Calu3 (cell line): ENCODE measurements at regions of chr3 and their contacts with region 1.

Region 1: GRCh38 chr3:194592798-194593752 is 40.1 kb downstream of the TMEM44 start:
- DNase-seq: peak; percentile 78
- H3K4me3 Mint-ChIP-seq: no peak overlapping the region
- H3K27ac Mint-ChIP-seq: no peak overlapping the region
- H3K4me1 Mint-ChIP-seq: peaks cover 26% of the 10 kb centered on the region
- H3K27me3 Mint-ChIP-seq: no peaks in the 10 kb centered on the region
- CTCF ChIP-seq: no peak

Region 2: DNA sequence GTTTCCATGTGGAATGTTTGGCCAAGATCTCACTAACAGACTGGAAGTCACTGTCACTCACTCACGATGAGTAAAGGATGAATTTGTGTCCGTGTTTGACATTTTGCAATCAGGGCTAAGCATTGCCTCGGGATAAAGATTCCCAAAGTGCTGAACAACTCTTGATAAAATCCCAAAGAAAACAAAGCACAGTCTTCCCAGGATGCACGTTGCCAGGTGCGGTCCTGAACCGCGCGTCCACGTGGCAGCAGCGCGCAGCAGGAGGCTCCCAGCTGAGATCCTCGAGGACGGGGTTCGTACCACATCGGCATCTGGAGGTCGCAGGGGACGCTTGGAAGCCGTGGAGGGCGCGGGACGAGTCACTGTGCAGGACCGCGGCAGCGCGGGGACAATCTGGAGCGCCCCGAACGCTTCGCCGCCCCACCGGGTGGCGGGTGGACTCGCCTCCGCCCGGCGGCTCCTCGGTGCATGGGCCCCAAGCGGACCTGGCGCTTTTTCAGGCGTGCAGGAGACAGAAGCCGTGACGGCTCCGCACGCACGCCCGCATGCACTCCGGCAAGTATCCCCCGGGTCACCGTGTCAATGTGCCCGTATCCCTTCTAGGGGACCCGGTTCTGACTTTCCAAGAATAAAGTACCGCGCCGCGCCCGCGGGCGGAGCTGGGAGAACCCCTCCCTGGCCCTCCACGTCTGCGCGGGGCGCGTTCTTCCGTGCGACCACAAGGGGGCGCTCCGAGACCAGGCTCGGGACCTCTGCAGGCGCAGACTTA is 259.7 kb before region 1 on chr3:
- CTCF ChIA-PET with region 1: interaction called, 6 read pairs
- intact Hi-C with region 1: loop called (anchors 2 kb)
- DNase-seq: peak; percentile 97
- H3K4me3 Mint-ChIP-seq: peak overlapping the region; percentile 82
- H3K27ac Mint-ChIP-seq: peak overlapping the region; percentile 26
- H3K4me1 Mint-ChIP-seq: peaks cover 22% of the 10 kb centered on the region
- H3K27me3 Mint-ChIP-seq: peaks cover 19% of the 10 kb centered on the region
- CTCF ChIP-seq: peak; percentile 100

Region 3: DNA sequence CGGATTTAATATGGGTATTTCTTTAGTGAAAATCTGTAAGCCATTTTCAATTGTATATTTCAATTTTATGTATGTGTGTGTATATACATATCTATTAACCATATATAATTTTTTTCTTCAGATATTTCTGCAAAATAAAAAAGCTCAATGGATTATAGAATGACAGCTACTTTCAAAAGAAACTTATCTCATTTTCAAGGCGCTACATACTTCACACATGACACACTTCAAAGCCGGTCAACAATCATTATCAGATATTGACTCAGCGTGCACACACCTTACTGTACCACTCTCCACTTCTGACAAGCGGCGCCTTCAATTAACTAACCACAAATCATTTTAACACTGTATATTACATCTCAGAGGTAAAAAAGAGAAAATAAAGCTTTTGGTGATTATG is 145.9 kb before region 1 on chr3:
- CTCF ChIA-PET with region 1: interaction called, 23 read pairs
- intact Hi-C with region 1: no loop called
- DNase-seq: peak; percentile 58
- H3K4me3 Mint-ChIP-seq: no peak overlapping the region
- H3K27ac Mint-ChIP-seq: no peak overlapping the region
- H3K4me1 Mint-ChIP-seq: peaks cover 15% of the 10 kb centered on the region
- H3K27me3 Mint-ChIP-seq: no peaks in the 10 kb centered on the region
- CTCF ChIP-seq: no peak

Region 4: GRCh38 chr3:194472290-194472920 is 120.7 kb before region 1 on chr3:
- CTCF ChIA-PET with region 1: interaction called, 54 read pairs
- intact Hi-C with region 1: loop called (anchors 1 kb)
- DNase-seq: peak; percentile 49
- H3K4me3 Mint-ChIP-seq: no peak overlapping the region
- H3K27ac Mint-ChIP-seq: no peak overlapping the region
- H3K4me1 Mint-ChIP-seq: peaks cover 9% of the 10 kb centered on the region
- H3K27me3 Mint-ChIP-seq: no peaks in the 10 kb centered on the region
- CTCF ChIP-seq: peak; percentile 87

Region 5: GRCh38 chr3:194486540-194487288 is 106.4 kb before region 1 on chr3 and contains the start of gene ATP13A3:
- CTCF ChIA-PET with region 1: interaction called, 15 read pairs
- intact Hi-C with region 1: no loop called
- DNase-seq: peak; percentile 94
- H3K4me3 Mint-ChIP-seq: peak within 1 kb of the TSS; percentile 80
- H3K27ac Mint-ChIP-seq: peak within 1 kb of the TSS; percentile 60
- H3K4me1 Mint-ChIP-seq: peaks cover 45% of the 10 kb centered on the region
- H3K27me3 Mint-ChIP-seq: no peaks in the 10 kb centered on the region
- CTCF ChIP-seq: no peak
- total RNA-seq, gene ATP13A3: 229 and 237 TPM in 2 replicates

Region 6: DNA sequence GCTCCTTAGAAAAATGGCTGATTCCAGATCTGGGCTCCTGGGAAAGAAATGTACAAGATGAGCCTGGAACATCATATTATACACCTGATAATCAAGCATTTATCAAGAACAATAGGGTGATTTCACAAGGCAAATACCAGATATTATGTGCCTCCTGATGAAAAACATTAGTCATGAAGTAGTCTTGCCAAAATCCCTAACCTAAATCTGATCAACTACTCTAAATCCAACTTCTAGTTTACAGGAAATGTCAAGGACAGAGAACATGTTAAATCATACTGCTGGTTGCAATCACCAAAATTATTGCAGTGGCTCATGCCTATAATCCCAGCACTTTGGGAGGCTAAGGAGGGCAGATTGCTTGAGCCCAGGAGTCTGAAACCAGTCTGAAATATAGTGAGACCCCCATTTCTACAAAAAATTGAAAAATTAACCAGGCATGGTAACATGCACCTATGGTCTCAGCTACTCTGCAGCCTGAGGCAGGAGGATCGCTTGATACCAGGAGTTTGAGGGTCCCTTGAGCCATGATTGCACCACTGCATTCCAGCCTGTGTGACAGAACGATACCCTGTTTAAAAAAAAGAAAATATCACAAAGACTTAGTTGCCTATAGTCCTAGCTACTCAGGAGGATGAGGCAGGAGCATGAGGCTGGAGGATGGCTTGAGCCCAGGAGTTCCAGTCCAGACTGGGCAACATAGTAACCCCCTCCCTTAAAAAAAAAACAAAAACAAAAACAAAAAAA is 71.4 kb before region 1 on chr3:
- CTCF ChIA-PET with region 1: no interaction called
- intact Hi-C with region 1: loop called (anchors 5 kb)
- DNase-seq: no peak
- H3K4me3 Mint-ChIP-seq: peak overlapping the region; percentile 37
- H3K27ac Mint-ChIP-seq: peak overlapping the region; percentile 78
- H3K4me1 Mint-ChIP-seq: peaks cover 78% of the 10 kb centered on the region
- H3K27me3 Mint-ChIP-seq: no peaks in the 10 kb centered on the region
- CTCF ChIP-seq: no peak

Region 7: GRCh38 chr3:194573691-194574437 is 19.2 kb before region 1 on chr3:
- CTCF ChIA-PET with region 1: interaction called, 13 read pairs
- intact Hi-C with region 1: no loop called
- DNase-seq: peak; percentile 69
- H3K4me3 Mint-ChIP-seq: no peak overlapping the region
- H3K27ac Mint-ChIP-seq: no peak overlapping the region
- H3K4me1 Mint-ChIP-seq: peaks cover 70% of the 10 kb centered on the region
- H3K27me3 Mint-ChIP-seq: no peaks in the 10 kb centered on the region
- CTCF ChIP-seq: peak; percentile 78